Calu3 (cell line): ENCODE measurements at regions of chr5 and their contacts with region 1.

Region 1: DNA sequence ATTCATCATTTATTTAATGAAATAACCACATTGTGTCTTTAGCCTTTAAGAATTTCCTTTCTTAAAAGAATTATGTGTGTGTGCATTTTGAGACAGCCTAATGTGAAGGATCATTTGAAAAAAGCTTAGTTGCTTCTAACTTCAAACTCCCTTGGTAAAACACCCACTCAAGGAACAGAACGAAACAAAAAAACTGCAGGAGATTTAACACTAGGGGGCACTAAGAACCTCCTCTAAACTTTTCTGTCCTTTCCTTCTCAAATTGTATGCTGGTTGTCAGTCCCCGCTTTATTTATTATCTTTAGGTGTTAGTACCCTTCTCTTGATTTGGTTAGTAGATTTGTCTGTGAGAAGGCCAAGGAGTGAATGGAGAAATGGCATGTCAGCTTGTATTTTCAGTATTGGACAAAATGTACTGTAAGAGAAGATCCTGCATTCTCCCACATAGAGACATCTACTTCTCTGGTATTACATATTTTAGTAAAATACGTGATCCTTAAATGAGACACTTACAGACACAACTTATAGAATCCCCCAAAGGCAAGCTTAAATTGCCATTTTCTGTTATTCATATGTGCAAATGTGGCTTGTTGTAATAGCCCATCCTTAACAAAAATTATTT is 229.7 kb downstream of the MRPS30 start:
- DNase-seq: peak; percentile 2
- H3K4me3 Mint-ChIP-seq: no peak overlapping the region
- H3K27ac Mint-ChIP-seq: no peak overlapping the region
- H3K4me1 Mint-ChIP-seq: no peaks in the 10 kb centered on the region
- H3K27me3 Mint-ChIP-seq: no peaks in the 10 kb centered on the region
- CTCF ChIP-seq: peak; percentile 56

Region 2: GRCh38 chr5:44862808-44863207 is 175.7 kb before region 1 on chr5:
- CTCF ChIA-PET with region 1: no interaction called
- intact Hi-C with region 1: loop called (anchors 2 kb)
- DNase-seq: no peak
- H3K4me3 Mint-ChIP-seq: no peak overlapping the region
- H3K27ac Mint-ChIP-seq: no peak overlapping the region
- H3K4me1 Mint-ChIP-seq: peaks cover 20% of the 10 kb centered on the region
- H3K27me3 Mint-ChIP-seq: no peaks in the 10 kb centered on the region
- CTCF ChIP-seq: peak; percentile 16

Region 3: GRCh38 chr5:45521067-45521466 is 482.6 kb after region 1 on chr5:
- CTCF ChIA-PET with region 1: no interaction called
- intact Hi-C with region 1: loop called (anchors 2 kb)
- DNase-seq: peak; percentile 27
- H3K4me3 Mint-ChIP-seq: no peak overlapping the region
- H3K27ac Mint-ChIP-seq: no peak overlapping the region
- H3K4me1 Mint-ChIP-seq: no peaks in the 10 kb centered on the region
- H3K27me3 Mint-ChIP-seq: no peaks in the 10 kb centered on the region
- CTCF ChIP-seq: peak; percentile 31

Region 4: GRCh38 chr5:45639038-45639437 is 600.6 kb after region 1 on chr5:
- CTCF ChIA-PET with region 1: no interaction called
- intact Hi-C with region 1: loop called (anchors 5 kb)
- DNase-seq: no peak
- H3K4me3 Mint-ChIP-seq: no peak overlapping the region
- H3K27ac Mint-ChIP-seq: no peak overlapping the region
- H3K4me1 Mint-ChIP-seq: no peaks in the 10 kb centered on the region
- H3K27me3 Mint-ChIP-seq: no peaks in the 10 kb centered on the region
- CTCF ChIP-seq: no peak

Region 5: GRCh38 chr5:45774528-45774927 is 736.1 kb after region 1 on chr5:
- CTCF ChIA-PET with region 1: no interaction called
- intact Hi-C with region 1: loop called (anchors 2 kb)
- DNase-seq: no peak
- H3K4me3 Mint-ChIP-seq: no peak overlapping the region
- H3K27ac Mint-ChIP-seq: no peak overlapping the region
- H3K4me1 Mint-ChIP-seq: no peaks in the 10 kb centered on the region
- H3K27me3 Mint-ChIP-seq: no peaks in the 10 kb centered on the region
- CTCF ChIP-seq: no peak